Caco-2 (cell line): ENCODE measurements at regions of chr2 and their contacts with region 1.

Region 1: DNA sequence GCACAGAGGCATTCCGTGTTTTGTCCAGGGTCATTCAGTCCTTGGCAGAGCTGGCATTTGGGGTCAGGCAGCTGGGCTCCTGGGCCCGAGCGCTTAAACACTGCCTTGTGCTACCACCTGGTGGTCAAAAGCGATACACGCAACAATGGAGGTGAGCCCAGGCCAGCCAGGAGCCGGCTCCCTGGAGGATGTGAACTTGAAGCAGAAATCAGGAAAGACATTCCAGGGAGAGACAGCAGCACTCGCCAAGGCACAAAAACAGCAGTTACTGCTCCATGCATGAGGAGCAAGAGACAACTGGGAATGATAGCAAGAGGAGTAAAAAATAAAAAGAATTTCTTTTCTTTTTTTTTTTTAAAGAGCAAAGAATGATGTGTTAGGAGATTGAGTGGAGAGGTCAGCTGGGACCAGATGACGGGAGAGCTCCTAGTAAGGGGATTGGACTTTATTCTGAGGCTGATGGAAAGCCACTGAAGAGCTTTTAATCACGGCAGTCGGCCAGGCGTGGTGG is 20.7 kb downstream of the SCYGR8 start:
- DNase-seq: peak; percentile 78 to 82
- H3K4me3 ChIP-seq: no peak overlapping the region
- H3K4me3 Mint-ChIP-seq: no peak overlapping the region
- H3K27ac Mint-ChIP-seq: peak overlapping the region; percentile 3
- H3K4me1 ChIP-seq: peaks cover 25% of the 10 kb centered on the region
- H3K4me1 Mint-ChIP-seq: peaks cover 23% of the 10 kb centered on the region
- H3K27me3 ChIP-seq: no peaks in the 10 kb centered on the region
- H3K27me3 Mint-ChIP-seq: no peaks in the 10 kb centered on the region
- CTCF ChIP-seq: peak; percentile 76 to 81

Region 2: DNA sequence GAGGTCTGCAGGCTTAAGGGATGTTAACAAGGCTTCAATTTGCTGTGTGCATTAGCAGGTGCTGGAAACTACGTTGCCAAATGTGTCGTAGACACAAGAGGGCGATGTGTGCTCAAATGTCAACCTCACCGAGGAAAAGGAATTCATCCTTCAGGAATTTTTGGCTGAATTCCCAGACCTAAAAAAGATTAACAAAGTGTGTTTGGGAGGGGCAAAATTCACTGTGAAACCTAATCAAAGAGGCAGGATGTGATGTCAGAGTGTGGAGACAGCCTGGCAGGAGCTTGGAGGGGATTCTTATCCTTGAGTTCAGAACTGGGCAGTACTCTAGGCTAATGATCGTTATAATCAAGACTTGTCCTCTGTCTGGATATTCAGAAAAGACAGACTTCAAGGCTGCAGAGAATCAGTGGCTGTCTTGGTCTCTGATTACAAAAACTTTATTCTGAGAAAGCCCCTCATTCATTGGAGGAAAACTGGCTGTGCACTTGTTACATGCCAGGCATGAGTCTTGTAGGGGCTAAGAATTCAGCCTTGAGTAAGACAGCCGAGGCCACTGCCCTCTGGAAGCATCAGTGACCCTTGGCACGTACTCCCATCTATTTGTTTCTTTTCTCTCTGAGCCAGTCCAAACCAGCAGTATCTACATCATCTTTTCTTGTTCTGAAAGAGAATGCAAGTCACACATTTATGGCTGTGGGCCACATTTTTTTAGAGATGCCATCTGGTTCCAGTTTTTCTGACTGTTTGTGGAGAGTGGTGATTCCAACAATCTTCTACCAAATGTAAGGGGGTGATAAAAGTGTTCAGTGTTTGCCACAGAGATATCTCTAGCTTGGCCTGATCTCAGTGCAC is 360.0 kb before region 1 on chr2:
- CTCF ChIA-PET with region 1: interaction called, 4 read pairs
- POLR2A ChIA-PET with region 1: no interaction called
- intact Hi-C with region 1: loop called (anchors 1 kb)
- DNase-seq: peak; percentile 67
- H3K4me3 ChIP-seq: no peak overlapping the region
- H3K4me3 Mint-ChIP-seq: no peak overlapping the region
- H3K27ac Mint-ChIP-seq: peak overlapping the region; percentile 86
- H3K4me1 ChIP-seq: peaks cover 8% of the 10 kb centered on the region
- H3K4me1 Mint-ChIP-seq: peaks cover 22% of the 10 kb centered on the region
- H3K27me3 ChIP-seq: no peaks in the 10 kb centered on the region
- H3K27me3 Mint-ChIP-seq: no peaks in the 10 kb centered on the region
- CTCF ChIP-seq: peak; percentile 58 to 60

Region 3: GRCh38 chr2:227578651-227579050 is 187.8 kb before region 1 on chr2:
- CTCF ChIA-PET with region 1: no interaction called
- POLR2A ChIA-PET with region 1: no interaction called
- intact Hi-C with region 1: loop called (anchors 5 kb)
- DNase-seq: no peak
- H3K4me3 ChIP-seq: no peak overlapping the region
- H3K4me3 Mint-ChIP-seq: no peak overlapping the region
- H3K27ac Mint-ChIP-seq: no peak overlapping the region
- H3K4me1 ChIP-seq: peaks cover 12% of the 10 kb centered on the region; the same call in 1 of the 2 replicates
- H3K4me1 Mint-ChIP-seq: peaks cover 20% of the 10 kb centered on the region
- H3K27me3 ChIP-seq: no peaks in the 10 kb centered on the region
- H3K27me3 Mint-ChIP-seq: no peaks in the 10 kb centered on the region
- CTCF ChIP-seq: no peak

Region 4: GRCh38 chr2:227703280-227703732 is 63.1 kb before region 1 on chr2:
- CTCF ChIA-PET with region 1: interaction called, 4 read pairs
- POLR2A ChIA-PET with region 1: interaction called, 4 read pairs
- intact Hi-C with region 1: loop called (anchors 1 kb)
- DNase-seq: peak; percentile 84 to 89
- H3K4me3 ChIP-seq: no peak overlapping the region
- H3K4me3 Mint-ChIP-seq: peak overlapping the region; percentile 60
- H3K27ac Mint-ChIP-seq: peak overlapping the region; percentile 96
- H3K4me1 ChIP-seq: peaks cover 51% of the 10 kb centered on the region
- H3K4me1 Mint-ChIP-seq: peaks cover 34% of the 10 kb centered on the region
- H3K27me3 ChIP-seq: no peaks in the 10 kb centered on the region
- H3K27me3 Mint-ChIP-seq: no peaks in the 10 kb centered on the region
- CTCF ChIP-seq: no peak

Region 5: GRCh38 chr2:227783404-227784138 is 17.1 kb after region 1 on chr2:
- CTCF ChIA-PET with region 1: no interaction called
- POLR2A ChIA-PET with region 1: no interaction called
- intact Hi-C with region 1: no loop called
- DNase-seq: no peak
- H3K4me3 ChIP-seq: no peak overlapping the region
- H3K4me3 Mint-ChIP-seq: no peak overlapping the region
- H3K27ac Mint-ChIP-seq: no peak overlapping the region
- H3K4me1 ChIP-seq: no peaks in the 10 kb centered on the region
- H3K4me1 Mint-ChIP-seq: peaks cover 6% of the 10 kb centered on the region
- H3K27me3 ChIP-seq: no peaks in the 10 kb centered on the region
- H3K27me3 Mint-ChIP-seq: no peaks in the 10 kb centered on the region
- CTCF ChIP-seq: no peak

Region 6: DNA sequence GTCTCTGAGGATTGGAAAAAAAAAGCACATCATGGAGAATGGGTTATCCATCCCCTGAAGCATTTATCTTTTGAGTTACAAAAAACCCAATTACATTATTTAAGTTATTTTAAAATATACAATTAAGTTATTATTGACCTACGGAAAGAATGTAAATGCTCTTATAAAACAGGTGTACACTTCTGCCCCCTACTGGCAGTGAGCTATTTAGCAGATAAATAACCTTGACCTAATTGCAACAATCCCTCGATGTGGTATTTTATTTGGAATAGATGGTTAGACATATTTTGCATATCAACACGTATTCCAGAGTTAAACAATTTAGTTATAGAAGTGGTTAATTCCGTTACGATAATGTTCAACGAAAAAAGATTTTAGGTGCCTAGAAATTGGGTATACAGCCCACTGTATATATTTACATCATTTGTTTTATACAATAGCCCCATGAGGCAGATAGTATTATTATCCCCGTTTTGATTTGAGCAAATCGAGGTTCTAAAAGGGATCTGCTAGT is 95.9 kb after region 1 on chr2:
- CTCF ChIA-PET with region 1: interaction called, 7 read pairs
- POLR2A ChIA-PET with region 1: no interaction called
- intact Hi-C with region 1: loop called (anchors 1 kb)
- DNase-seq: peak in 1 of 2 experiments; percentile 23
- H3K4me3 ChIP-seq: no peak overlapping the region
- H3K4me3 Mint-ChIP-seq: no peak overlapping the region
- H3K27ac Mint-ChIP-seq: no peak overlapping the region
- H3K4me1 ChIP-seq: peaks cover 16% of the 10 kb centered on the region
- H3K4me1 Mint-ChIP-seq: peaks cover 19% of the 10 kb centered on the region
- H3K27me3 ChIP-seq: no peaks in the 10 kb centered on the region
- H3K27me3 Mint-ChIP-seq: no peaks in the 10 kb centered on the region
- CTCF ChIP-seq: peak; percentile 30 to 47